Sciatic nerve (tissue), 2 donors: ENCODE measurements at regions of chr19 and their contacts with region 1.

Region 1: DNA sequence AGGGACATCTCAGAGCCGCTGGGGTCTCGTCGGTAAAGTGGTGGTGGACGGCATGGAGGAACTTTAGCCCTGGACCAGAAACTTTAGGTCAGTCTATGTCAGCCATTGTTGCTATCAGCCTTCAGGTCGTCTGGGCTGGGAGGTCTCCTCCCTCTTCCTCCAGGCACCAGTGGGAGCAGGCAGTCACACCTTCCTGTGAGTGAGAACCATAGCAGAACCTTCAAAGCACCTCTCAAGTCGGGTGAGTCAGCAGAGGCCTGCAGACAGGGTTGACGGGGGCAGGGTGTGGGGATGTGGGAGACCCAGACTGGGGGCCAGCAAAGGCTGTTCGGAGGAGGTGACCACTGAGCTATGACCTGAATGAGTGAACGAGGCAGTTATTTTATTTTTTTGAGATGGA is 15.4 kb upstream of the SBNO2 start:
- DNase-seq: no peak
- ATAC-seq: no peak

Region 2: GRCh38 chr19:1103132-1103707 is 86.2 kb before region 1 on chr19:
- intact Hi-C with region 1: no loop called
- DNase-seq: no peak
- ATAC-seq: no peak

Region 3: DNA sequence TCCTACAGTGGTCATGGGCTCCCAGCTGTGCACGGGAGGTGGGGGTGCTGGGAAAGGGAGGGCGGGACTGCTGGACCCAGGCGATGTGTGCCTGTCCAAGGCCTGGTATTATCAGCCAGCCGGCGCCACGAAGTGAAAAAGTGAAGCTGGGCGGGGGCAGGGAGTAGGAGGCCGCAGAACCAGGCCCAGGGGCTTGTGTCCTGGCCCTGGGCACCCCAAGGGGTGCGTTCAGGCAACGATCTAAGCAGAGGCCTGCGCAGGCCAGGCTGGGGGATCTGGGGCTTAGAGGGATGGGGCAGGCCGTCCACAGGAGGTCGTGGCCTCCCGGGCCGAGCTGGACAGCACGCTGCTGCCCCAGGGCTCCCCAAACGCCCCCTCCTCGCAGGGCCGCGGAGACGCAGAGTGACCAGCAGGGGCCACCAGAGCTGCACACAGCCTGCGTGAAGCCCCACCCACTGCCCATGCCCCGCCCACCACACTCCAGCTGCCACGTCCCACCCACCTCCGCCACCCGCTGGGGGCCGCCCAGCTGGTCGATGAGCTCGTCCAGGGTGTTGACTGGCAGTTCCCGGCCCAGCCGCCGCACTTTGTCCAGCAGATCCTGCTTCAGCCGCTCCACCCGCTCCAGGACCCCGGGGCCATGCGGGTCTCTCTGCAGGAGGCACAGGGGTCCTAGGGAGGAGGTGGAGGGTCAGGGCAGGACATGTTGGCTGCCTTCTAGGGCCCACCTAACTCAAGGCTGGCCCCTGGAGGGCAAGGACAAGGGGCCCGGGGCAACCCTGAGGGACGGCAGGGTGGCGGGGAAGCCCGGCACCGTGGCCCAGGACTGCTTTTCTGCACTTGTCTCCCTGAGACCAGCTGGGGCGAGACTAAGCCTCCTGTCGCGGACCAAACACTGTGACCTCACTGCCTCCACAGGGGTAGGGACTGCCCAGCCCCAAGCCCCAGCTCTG is 76.1 kb before region 1 on chr19:
- intact Hi-C with region 1: loop called (anchors 5 kb)
- DNase-seq: peak; percentile 98
- ATAC-seq: peak; percentile 92

Region 4: DNA sequence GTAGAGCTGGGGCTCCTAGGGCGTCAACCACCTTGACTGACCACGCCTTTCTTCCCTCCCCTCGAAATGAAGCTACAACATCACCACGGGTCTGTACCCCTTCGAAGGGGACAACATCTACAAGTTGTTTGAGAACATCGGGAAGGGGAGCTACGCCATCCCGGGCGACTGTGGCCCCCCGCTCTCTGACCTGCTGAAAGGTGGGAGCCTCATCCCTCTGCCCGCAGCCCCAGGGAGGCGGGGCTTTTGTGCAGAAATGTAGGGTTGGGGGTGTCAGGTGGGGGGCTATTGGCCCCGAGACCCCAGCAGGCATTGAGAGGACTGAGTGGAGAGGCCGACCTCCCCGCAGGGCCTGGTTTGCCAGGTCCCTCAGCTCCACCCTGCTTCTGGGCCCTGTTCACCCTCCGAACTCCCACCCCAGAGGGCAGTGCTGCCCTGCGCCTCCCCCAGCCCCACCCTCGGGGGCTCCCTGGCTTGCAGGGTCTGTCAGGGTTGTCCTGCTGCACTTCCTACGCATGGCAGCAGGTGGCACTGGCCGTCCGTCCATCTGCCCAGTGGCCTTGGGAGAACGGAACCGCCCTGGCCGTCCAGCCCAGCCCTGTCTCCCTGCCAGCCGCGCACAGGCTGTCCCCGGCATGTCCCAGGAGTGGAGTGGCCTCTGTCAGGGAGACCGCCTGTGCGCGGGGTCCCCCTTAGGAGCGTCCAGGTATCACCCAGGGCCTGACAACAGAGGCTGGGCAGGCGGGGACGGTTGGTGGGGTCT is 31.9 kb after region 1 on chr19:
- intact Hi-C with region 1: loop called (anchors 1 kb)
- DNase-seq: peak; percentile 84
- ATAC-seq: peak; percentile 63